Panc1 (cell line): ENCODE measurements at regions of chr1 and their contacts with region 1.

Region 1: DNA sequence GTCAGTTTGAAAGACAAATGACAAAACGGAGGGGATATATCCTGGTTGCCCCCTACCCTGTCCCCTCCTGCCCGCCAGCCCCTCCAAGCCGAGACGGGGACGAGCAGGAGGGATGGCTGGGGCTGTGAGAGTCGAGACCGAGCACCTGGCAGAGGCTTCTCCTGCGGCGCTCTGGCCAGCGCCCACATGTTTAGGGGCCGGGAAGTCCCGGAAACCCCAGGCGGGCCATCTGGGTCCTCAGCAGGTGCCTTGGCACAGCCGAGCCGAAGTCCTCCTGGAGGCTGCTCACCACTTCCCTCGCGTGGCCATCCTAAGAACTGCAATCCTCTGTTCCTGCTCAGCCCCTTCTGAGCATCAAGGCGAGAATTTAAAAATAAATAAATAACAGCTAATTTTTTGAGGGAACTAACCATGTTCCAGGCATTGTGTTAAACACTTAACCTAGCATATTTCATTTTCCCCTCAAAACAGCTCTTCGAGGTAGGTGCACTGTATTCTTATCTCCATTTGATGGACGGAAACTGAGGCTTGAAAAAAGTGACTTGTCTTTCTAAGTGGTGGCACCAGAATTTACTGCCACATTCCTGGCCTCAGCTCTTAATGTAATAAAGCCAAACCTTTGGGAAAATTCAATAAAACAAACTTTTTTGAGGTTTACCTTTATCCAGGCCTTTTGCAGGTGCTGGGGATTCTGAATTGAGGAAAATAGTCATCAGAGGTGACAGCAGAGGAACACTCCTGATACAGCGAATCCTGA is 3.5 kb upstream of the RIMS3 start:
- DNase-seq: peak; percentile 61
- ATAC-seq: peak; percentile 68
- H3K4me3 ChIP-seq: peak overlapping the region; percentile 19 to 29
- H3K27ac ChIP-seq: no peak overlapping the region
- H3K4me1 ChIP-seq: peaks cover 5% of the 10 kb centered on the region
- H3K27me3 ChIP-seq: no peaks in the 10 kb centered on the region
- CTCF ChIP-seq: peak; percentile 97

Region 2: DNA sequence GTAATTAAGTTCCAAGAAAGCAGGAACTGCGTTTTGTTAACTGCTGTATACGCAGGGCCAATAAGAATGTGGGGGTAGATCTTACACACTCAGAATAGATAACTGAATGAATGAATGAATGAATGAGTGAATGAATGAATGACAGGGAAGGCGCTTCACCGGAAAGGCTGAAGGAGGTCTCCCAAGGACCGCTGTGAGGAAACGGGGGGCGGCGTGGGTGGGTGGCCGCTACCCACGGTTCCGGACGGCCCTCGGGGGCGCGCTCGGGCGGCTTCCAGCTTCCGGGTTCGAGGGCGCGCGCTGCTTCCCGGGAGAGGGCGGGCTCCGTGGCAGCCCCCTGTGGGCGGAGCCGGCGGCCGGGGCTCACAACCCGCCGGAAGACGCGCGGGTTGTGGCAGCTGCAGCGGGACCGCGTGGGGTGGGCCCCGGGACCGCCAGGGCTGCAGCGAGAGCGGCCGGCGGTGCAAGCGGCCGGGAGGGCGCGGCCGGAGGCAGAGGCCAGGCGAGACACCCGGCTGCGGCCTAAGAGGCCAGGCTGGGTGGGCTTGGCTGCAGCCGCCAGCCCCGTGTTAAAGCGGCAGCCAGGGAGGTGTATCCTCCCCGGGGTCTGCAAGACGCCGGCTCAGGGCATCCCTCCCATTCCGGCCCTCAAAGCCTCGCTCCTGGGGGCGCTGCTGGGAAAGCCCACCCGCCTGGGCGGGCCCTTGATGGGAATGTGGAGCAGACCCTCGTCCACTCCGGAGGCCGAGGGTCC is 191.8 kb before region 1 on chr1 and contains the start of gene ZFP69:
- CTCF ChIA-PET with region 1: no interaction called
- POLR2A ChIA-PET with region 1: no interaction called
- in situ Hi-C with region 1: no loop called
- intact Hi-C with region 1: no loop called
- DNase-seq: no peak
- ATAC-seq: peak; percentile 97
- H3K4me3 ChIP-seq: peak within 1 kb of the TSS; percentile 79 to 90
- H3K27ac ChIP-seq: peak within 1 kb of the TSS; percentile 94
- H3K4me1 ChIP-seq: peaks cover 4% of the 10 kb centered on the region; the same call in 1 of the 2 replicates
- H3K27me3 ChIP-seq: no peaks in the 10 kb centered on the region
- CTCF ChIP-seq: no peak
- total RNA-seq, gene ZFP69: 6.4 TPM

Region 3: GRCh38 chr1:40711465-40712404 is 42.8 kb after region 1 on chr1:
- CTCF ChIA-PET with region 1: interaction called, 16 read pairs
- POLR2A ChIA-PET with region 1: no interaction called
- in situ Hi-C with region 1: no loop called
- intact Hi-C with region 1: no loop called
- DNase-seq: no peak
- ATAC-seq: no peak
- H3K4me3 ChIP-seq: peak overlapping the region; percentile 2 to 63; a peak in 1 of 4 replicates
- H3K27ac ChIP-seq: peak overlapping the region; percentile 91
- H3K4me1 ChIP-seq: peaks cover 33% of the 10 kb centered on the region
- H3K27me3 ChIP-seq: no peaks in the 10 kb centered on the region
- CTCF ChIP-seq: no peak